ENCODE measurements at regions of chr17 and their contacts with region 1.

Region 1: DNA sequence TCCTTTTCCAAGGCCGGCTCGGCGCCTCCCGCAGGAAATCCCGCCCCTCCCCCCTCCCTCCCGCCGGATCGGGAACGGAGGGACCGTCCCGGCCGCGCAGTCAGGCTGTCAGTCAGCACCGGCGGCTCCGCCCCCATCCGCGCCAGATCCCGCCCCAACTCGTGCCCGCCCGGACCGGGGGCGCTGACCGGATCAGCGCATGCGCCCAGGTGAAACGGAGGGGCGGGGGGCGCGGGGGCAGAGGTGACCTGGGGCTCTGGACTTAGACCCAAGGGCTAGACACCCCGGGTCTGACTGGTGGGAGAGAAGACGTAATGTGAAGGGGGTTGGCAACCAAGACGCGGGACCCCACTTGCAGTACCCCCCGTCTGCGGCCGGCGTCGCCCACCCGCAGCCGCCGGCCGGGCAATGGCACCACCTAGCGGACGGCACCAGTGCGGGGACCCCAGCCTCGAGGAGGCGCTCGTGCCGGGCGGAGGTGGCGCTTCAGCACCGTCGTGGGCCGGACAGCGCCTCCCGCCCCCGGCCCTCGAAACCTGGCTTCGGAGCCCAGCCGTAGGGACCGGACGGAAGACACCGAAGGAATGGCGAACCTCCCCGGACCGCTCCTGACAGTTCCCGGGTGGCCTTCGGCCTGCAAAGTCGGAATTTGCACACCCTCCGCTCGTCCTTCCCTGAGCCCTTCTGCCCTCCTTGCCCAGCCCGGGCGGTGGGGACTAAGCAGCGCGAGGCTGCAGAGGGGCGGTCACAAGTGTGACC is at the start of gene CASKIN2:
- DNase-seq: peak; percentile 97
- H3K4me3 ChIP-seq: peak within 1 kb of the TSS; percentile 92 to 98 (median 96)
- H3K27ac ChIP-seq: peak within 1 kb of the TSS; percentile 93 to 96 (median 94)
- H3K4me1 ChIP-seq: peaks cover 48 to 70% (median 60%) of the 10 kb centered on the region in 4 donors
- H3K27me3 ChIP-seq: no peaks in the 10 kb centered on the region
- CTCF ChIP-seq: peak; percentile 96 to 97 (median 97)
- EP300 ChIP-seq: no peak
- POLR2A ChIP-seq: no peak
- total RNA-seq, gene CASKIN2: 16.2 to 43.5 (median 35.5) TPM

Region 2: DNA sequence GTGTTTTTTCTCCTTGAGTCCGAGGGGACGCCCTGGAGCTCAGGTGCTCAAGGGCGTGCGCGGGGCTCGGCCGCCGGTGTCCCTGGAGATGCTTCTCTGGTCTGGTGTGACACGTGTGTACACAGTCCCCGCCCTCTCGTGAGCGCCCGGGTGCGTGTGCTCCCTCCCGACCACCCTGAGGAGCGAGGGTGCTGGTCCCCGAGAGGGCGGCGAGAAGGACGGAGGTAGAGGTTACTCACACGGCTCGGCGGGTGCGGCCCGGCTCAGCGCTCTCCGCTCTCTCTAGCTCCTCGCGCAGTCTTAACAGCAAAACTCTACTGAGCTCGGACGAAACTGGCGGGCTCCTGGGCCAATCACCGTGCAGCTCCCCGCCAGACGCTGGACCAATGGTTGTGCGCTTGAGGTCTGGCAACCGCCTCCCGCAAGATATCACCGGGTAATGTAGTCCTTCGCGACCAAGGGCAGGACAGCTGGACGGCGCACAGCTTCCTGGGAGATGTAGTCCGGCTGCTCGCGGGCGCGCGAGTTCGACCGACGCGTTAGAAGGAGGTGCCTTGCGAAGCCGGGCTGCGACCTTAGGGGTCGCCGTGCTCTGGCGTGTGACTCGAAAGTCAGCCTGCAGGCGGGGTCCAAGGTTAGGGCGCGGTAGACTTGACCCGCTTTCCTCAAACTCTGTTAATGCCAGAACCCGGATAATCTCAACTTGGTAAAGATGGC is 226.4 kb before region 1 on chr17 and contains the start of gene SLC25A19:
- intact Hi-C with region 1: loop called (anchors 10 kb)
- DNase-seq: peak; percentile 99
- H3K4me3 ChIP-seq: peak within 1 kb of the TSS; percentile 64 to 88 (median 74)
- H3K27ac ChIP-seq: peak within 1 kb of the TSS; percentile 85 to 96 (median 89)
- H3K4me1 ChIP-seq: peaks cover 9 to 17% (median 14%) of the 10 kb centered on the region in 4 donors
- H3K27me3 ChIP-seq: no peaks in the 10 kb centered on the region
- CTCF ChIP-seq: peak in 1 of 3 experiments; percentile 15
- EP300 ChIP-seq: no peak
- POLR2A ChIP-seq: peak; percentile 55
- total RNA-seq, gene SLC25A19: 9.6 to 17.5 (median 15.2) TPM

Region 3: DNA sequence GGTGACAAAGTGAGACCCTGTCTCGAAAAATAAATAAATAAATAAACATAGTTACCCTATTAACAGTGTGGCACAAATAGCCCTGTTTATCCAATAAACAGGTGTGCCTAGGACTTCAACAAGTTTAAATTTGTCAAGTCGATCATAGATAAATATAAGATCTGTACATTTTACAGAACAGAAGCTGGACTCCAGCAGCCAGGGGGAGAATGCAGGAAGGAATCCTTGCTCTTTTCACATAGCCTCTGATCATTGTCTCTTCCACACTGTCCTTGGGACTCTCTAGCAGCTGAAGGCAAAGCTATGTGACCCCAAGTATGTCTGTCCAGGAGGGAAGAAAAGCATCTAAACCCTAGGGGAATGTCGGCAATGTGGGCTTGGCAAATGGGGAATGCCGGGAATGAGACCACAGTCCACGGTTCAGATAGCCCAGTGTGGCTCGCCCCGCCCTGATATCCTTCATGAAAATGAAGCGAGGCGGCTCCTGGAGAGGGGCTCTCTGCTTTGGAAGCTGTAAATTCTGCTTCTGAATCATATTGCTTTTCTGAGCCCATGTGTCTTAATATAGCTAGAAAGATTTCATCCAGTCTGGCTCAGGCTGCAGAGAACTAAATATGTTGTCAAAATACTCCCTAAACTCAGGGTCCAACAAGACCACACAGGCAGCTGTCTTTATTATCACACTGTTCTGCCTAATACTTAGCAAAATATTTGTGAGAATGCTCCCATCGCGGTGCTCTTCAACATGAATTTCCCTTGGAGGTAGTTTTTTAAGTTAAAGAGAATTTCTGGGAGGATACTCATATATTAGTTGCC is 85.3 kb before region 1 on chr17:
- intact Hi-C with region 1: loop called (anchors 1 kb)
- DNase-seq: no peak
- H3K4me3 ChIP-seq: no peak overlapping the region
- H3K27ac ChIP-seq: peak overlapping the region; percentile 80 to 87 (median 82)
- H3K4me1 ChIP-seq: peaks cover 10 to 40% (median 37%) of the 10 kb centered on the region in 4 donors
- H3K27me3 ChIP-seq: no peaks in the 10 kb centered on the region
- CTCF ChIP-seq: peak; percentile 9 to 13 (median 13)
- EP300 ChIP-seq: no peak
- POLR2A ChIP-seq: no peak